Activated naive CD4-positive, alpha-beta T cell treated with anti-CD3 and anti-CD28 coated beads for 36 hours (primary cell): ENCODE measurements at regions of chr10 and their contacts with region 1.

Region 1: GRCh38 chr10:70925377-70926225 is 37.2 kb upstream of the PCBD1 start:
- DNase-seq: peak; percentile 60
- H3K4me3 Mint-ChIP-seq: no peak overlapping the region
- H3K27ac Mint-ChIP-seq: peak overlapping the region; percentile 27
- H3K4me1 Mint-ChIP-seq: peaks cover 4% of the 10 kb centered on the region
- H3K27me3 Mint-ChIP-seq: no peaks in the 10 kb centered on the region

Region 2: DNA sequence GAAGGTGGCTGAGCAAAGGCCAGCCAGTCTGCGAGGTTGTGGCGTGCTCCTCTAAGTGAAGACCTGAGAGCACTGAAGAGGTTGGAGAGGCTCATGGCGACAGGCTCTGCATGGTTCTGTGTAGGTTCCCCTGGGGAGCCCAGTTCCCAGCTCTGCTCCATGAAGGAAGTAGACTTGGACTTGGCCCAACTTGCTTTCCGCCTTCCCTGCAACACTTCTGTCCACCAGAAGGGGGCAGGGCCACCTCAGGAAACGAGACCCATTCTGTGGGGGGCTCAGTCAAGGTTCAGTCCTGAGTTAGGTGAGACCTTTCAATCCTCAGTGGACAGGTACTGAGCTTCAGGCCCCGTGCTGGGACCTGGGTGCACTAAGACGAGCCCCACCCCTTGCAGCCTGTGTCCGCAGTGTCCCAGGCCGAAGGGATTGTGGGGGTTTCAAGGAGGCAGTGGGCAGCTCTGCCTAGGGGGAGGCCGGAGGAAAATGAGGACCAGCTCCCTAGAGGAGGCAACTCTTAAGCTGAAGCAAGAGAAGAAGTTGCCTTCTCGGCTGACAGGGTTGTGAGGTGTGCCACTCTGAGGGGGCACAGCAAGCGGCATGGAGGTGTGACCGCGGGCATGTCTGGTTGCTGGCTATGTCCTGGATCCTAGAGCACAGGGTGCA is 22.2 kb before region 1 on chr10:
- CTCF ChIA-PET with region 1: interaction called, 18 read pairs
- intact Hi-C with region 1: no loop called
- DNase-seq: peak; percentile 45
- H3K4me3 Mint-ChIP-seq: no peak overlapping the region
- H3K27ac Mint-ChIP-seq: no peak overlapping the region
- H3K4me1 Mint-ChIP-seq: no peaks in the 10 kb centered on the region
- H3K27me3 Mint-ChIP-seq: no peaks in the 10 kb centered on the region

Region 3: DNA sequence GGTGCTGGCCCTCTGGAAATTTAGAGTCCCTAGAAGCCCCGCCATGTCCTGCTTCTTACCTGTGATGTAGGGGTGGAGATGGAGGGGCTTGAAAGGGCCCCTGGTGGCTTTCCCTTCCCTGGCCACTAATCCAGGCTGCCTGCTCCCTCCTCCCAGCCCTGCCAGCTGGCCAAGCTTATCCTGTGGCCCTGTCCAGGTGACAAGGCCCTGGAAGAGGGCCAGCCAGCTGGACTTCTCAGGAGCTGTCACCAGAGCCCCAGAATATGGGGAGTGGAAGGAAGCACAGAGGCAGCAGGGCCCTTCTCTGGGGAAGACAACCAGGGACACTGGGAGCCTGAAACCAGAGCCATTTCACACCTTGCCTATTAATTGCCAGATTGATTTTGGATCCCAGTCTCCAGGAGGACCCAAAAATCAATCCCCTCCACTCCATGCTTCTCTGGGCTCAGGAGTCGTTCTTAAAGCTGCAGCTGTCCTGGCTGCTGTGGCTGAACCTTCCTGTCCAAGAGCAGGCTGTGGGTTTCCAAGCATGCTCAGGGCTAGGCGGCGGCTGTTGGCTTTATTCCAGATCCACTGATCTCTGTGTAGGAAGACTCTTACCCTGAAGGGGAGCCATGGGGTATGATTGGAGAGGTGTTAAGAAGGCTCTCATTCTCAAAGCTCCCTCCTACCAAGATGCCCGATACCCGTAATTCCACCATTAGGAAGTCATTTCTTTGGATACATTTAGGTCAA is 15.4 kb after region 1 on chr10:
- CTCF ChIA-PET with region 1: interaction called, 12 read pairs
- intact Hi-C with region 1: no loop called
- DNase-seq: no peak
- H3K4me3 Mint-ChIP-seq: no peak overlapping the region
- H3K27ac Mint-ChIP-seq: no peak overlapping the region
- H3K4me1 Mint-ChIP-seq: no peaks in the 10 kb centered on the region
- H3K27me3 Mint-ChIP-seq: no peaks in the 10 kb centered on the region

Region 4: GRCh38 chr10:71212318-71213126 is 286.9 kb after region 1 on chr10 and contains the start of gene UNC5B:
- CTCF ChIA-PET with region 1: interaction called, 15 read pairs
- intact Hi-C with region 1: loop called (anchors 1 kb)
- DNase-seq: peak; percentile 45
- H3K4me3 Mint-ChIP-seq: peak within 1 kb of the TSS; percentile 46
- H3K27ac Mint-ChIP-seq: no peak within 1 kb of the TSS
- H3K4me1 Mint-ChIP-seq: peaks cover 10% of the 10 kb centered on the region
- H3K27me3 Mint-ChIP-seq: peaks cover 60% of the 10 kb centered on the region
- total RNA-seq, gene UNC5B: 0.05 TPM

Region 5: DNA sequence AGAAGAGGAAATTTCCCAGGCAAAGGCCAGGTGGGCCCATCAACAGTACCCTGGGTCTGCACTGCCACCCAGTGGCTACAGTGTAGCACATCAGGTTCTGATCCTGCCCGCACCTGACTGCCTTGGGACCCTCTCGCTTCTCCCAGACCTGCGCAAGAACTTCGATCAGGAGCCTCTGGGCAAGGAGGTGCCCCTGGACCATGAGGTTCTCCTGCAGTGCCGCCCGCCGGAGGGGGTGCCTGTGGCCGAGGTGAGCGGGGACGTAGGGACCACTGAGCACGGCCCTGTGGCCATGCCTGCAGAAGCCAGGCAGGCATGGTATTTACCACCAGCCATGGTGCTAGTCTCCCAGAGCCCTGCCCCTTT is 359.6 kb after region 1 on chr10:
- CTCF ChIA-PET with region 1: interaction called, 19 read pairs
- intact Hi-C with region 1: loop called (anchors 1 kb)
- DNase-seq: peak; percentile 50
- H3K4me3 Mint-ChIP-seq: no peak overlapping the region
- H3K27ac Mint-ChIP-seq: no peak overlapping the region
- H3K4me1 Mint-ChIP-seq: no peaks in the 10 kb centered on the region
- H3K27me3 Mint-ChIP-seq: no peaks in the 10 kb centered on the region